Aorta (tissue), 5 donors: ENCODE measurements at regions of chr3 and their contacts with region 1.

Region 1: GRCh38 chr3:133578548-133579191 is 5.2 kb downstream of the CDV3 start:
- DNase-seq: no peak
- ATAC-seq: no peak
- H3K4me3 ChIP-seq: no peak overlapping the region
- H3K27ac ChIP-seq: no peak overlapping the region
- H3K4me1 ChIP-seq: peaks cover 2 to 5% of the 10 kb centered on the region in 2 donors
- H3K27me3 ChIP-seq: no peaks in the 10 kb centered on the region

Region 2: GRCh38 chr3:132803889-132804288 is 774.8 kb before region 1 on chr3:
- intact Hi-C with region 1: no loop called
- DNase-seq: no peak
- ATAC-seq: peak; percentile 59
- H3K4me3 ChIP-seq: no peak overlapping the region
- H3K27ac ChIP-seq: peak overlapping the region in 1 of 2 donors; percentile 23
- H3K4me1 ChIP-seq: peaks cover 0 to 3% of the 10 kb centered on the region in 2 donors
- H3K27me3 ChIP-seq: no peaks in the 10 kb centered on the region

Region 3: DNA sequence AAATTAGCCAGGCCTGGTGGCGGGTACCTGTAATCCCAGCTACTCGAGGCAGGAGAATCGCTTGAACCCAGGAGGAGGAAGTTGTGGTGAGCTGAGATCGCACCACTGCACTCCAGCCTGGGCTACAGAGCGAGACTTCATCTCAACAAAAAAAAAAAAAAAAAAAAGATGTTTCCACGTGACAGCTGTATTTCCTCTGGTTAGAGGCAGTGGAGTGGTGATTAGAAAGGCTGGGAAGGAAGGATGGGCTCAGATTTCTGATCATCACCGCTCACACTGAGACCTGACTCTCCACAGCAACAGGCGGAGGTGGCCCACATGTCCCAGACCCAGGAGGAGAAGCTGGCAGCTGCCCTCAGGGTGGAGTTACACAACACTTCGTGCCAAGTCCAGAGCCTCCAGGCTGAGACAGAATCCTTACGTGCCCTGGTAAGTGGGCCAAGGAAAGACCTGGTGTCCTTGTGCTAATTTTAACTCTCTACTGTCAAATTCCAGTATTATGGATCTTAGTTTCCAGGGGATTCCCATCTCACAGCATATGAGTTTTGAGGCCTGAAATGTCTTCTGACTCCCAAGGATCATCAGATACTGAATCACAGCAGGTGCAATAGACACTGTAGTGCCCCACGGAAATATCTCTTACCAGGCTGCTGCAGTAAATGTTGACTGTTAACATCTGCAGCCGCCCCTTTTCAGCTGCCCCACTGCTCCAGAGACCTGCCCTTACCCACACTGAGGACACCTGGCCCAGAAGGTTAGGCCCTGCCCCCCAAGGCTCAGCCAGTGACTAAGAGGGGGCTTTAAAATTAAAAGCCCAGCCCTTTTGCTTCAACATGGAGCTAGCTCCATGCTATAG is 111.9 kb before region 1 on chr3:
- intact Hi-C with region 1: loop called in 1 of 2 experiments (anchors 5 kb)
- DNase-seq: no peak
- ATAC-seq: no peak
- H3K4me3 ChIP-seq: no peak overlapping the region
- H3K27ac ChIP-seq: no peak overlapping the region
- H3K4me1 ChIP-seq: no peaks in the 10 kb centered on the region
- H3K27me3 ChIP-seq: no peaks in the 10 kb centered on the region

Region 4: DNA sequence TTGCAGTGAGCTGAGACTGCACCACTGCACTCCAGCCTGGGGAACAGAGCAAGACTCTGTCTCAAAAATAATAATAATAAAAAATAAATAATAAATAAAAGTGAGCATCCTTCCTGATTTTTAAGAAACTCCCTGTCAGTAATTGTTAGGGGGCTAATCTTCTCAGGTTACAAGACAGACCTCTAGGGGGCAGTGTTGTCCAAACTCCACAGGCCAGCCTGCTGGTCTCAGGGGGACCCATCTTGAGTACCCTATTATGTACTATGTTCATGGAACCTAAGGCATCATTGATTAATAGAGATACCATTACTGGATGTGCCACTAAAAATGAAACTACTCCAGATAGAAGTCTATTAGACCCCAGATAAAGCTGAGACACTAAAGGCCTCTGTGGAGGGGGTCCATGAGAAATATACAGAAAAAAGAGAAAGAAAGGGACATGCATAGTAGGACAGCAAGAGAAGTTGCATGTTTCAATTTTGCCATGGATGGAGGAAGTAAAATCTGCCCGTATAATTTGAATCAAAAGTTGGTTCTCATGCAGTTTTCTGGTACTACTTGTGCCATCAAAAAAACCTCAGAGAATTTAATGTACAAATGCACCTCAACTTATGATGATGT is 90.6 kb before region 1 on chr3:
- intact Hi-C with region 1: loop called in 1 of 2 experiments (anchors 5 kb)
- DNase-seq: no peak
- ATAC-seq: no peak
- H3K4me3 ChIP-seq: no peak overlapping the region
- H3K27ac ChIP-seq: no peak overlapping the region
- H3K4me1 ChIP-seq: no peaks in the 10 kb centered on the region
- H3K27me3 ChIP-seq: no peaks in the 10 kb centered on the region